A673 (cell line): ENCODE measurements at regions of chr7 and their contacts with region 1.

Region 1: GRCh38 chr7:149769915-149770314 is 3.5 kb downstream of the ZNF467 start:
- DNase-seq: no peak
- H3K4me3 ChIP-seq: no peak overlapping the region
- H3K27ac ChIP-seq: no peak overlapping the region
- H3K4me1 ChIP-seq: peaks cover 15% of the 10 kb centered on the region
- H3K27me3 ChIP-seq: no peaks in the 10 kb centered on the region
- CTCF ChIP-seq: no peak

Region 2: DNA sequence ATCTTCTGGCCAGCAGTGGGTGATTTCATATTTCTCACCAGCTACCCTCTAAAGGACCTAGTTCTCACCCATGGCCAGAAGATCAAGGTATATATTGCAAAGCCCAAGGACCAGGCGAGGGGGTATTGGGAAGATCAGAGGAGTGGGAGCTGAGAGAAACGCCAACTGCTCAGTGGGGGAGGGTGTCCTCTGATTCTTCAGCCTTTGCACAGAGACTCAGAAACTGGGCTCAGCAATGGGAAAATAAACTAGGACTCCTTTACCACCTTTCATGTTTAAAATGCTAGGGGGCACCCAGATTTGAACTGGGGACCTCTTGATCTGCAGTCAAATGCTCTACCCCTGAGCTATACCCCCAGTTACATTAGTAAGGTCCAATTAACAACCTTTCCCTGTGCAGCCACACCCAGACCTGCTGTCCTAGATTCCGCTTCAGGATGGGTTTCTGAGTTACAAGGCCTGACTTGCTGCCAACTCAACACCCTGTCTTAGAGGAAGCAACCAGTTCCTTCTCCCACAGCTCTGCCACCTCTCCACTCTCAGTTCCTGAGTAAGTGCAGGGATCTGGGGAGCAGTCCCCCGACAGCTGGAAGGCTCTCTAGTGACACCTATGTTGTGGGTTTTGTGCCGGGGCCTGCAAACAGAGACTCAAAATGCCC is 414.4 kb before region 1 on chr7:
- CTCF ChIA-PET with region 1: no interaction called
- POLR2A ChIA-PET with region 1: no interaction called
- intact Hi-C with region 1: no loop called
- DNase-seq: peak; percentile 3
- H3K4me3 ChIP-seq: no peak overlapping the region
- H3K27ac ChIP-seq: no peak overlapping the region
- H3K4me1 ChIP-seq: no peaks in the 10 kb centered on the region
- H3K27me3 ChIP-seq: no peaks in the 10 kb centered on the region
- CTCF ChIP-seq: no peak

Region 3: DNA sequence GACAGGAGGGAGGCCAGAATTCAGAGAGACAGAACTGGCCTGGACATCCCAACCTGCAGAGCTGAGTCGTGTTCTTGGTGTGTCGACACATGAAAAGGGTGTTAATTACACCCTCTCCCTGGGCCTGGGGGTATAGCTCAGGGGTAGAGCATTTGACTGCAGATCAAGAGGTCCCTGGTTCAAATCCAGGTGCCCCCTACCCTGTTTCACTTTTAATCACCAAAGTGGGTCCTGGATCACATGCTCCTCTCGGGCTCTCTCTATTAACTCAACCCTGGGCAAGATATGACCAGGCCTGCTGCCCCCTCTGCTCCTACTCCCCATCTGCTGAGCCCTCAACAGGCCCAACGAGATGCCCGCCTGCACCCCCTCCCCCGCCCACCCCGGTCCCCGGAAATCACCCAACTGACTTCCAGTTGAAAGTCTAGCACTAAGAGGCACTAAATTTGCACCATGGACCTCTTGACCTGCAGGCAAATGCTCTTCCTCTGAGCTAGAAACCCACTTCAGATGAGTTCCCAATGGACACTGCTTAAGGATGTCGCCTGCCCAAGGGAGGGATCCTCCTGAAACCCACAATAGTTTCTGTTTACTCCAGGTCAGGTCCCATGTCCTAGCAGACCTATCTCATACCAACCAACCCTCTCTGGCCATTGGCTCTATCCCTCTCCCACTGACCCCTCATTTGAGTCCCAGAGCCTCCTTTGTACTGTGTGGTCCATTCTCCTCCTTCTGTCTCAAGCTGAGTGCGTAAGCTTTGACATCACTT is 134.2 kb before region 1 on chr7:
- CTCF ChIA-PET with region 1: no interaction called
- POLR2A ChIA-PET with region 1: no interaction called
- intact Hi-C with region 1: no loop called
- DNase-seq: peak; percentile 25
- H3K4me3 ChIP-seq: no peak overlapping the region
- H3K27ac ChIP-seq: no peak overlapping the region
- H3K4me1 ChIP-seq: no peaks in the 10 kb centered on the region
- H3K27me3 ChIP-seq: peaks cover 24% of the 10 kb centered on the region
- CTCF ChIP-seq: no peak

Region 4: GRCh38 chr7:149707448-149707886 is 62.4 kb before region 1 on chr7:
- CTCF ChIA-PET with region 1: no interaction called
- POLR2A ChIA-PET with region 1: interaction called, 12 read pairs
- intact Hi-C with region 1: no loop called
- DNase-seq: no peak
- H3K4me3 ChIP-seq: no peak overlapping the region
- H3K27ac ChIP-seq: no peak overlapping the region
- H3K4me1 ChIP-seq: no peaks in the 10 kb centered on the region
- H3K27me3 ChIP-seq: no peaks in the 10 kb centered on the region
- CTCF ChIP-seq: no peak